ENCODE measurements at regions of chr2 and their contacts with region 1.

Region 1: GRCh38 chr2:57947398-57947797 is 99.2 kb upstream of the VRK2 start:
- DNase-seq: no peak
- ATAC-seq: no peak
- H3K4me3 Mint-ChIP-seq: no peak overlapping the region
- H3K27ac Mint-ChIP-seq: no peak overlapping the region
- H3K4me1 Mint-ChIP-seq: no peaks in the 10 kb centered on the region
- H3K27me3 Mint-ChIP-seq: no peaks in the 10 kb centered on the region

Region 2: DNA sequence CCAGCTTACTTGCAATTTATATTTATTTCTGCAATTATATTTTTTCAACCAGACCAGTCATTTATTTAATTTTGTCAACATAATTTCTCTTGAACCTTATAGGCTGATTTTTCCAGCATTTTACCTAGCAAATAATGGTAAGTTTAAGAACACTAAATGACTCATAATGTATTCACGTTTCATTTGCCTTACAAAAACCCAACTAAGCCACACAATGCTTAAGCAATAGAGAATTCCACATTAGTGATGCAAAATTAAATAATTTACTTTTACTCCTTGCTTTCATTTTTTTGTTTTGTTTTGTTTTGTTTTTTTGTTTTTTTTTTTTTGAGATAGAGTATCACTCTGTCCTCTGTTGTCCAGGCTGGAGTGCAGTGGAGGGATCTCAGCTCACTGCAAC is 11.2 kb before region 1 on chr2:
- CTCF ChIA-PET with region 1: no interaction called
- POLR2A ChIA-PET with region 1: no interaction called
- intact Hi-C with region 1: loop called in 1 of 2 experiments (anchors 2 kb)
- DNase-seq: no peak
- ATAC-seq: no peak
- H3K4me3 Mint-ChIP-seq: no peak overlapping the region
- H3K27ac Mint-ChIP-seq: no peak overlapping the region
- H3K4me1 Mint-ChIP-seq: no peaks in the 10 kb centered on the region
- H3K27me3 Mint-ChIP-seq: no peaks in the 10 kb centered on the region

Measured in activated CD4-positive, alpha-beta T cell treated with anti-CD3 and anti-CD28 coated beads for 36 hours (primary cell).